GM10248 (cell line): ENCODE measurements at regions of chr7 and their contacts with region 1.

Region 1: GRCh38 chr7:142853739-142854371 is 1.0 kb upstream of the EPHB6 start:
- DNase-seq: peak; percentile 84
- CTCF ChIP-seq: peak; percentile 64

Region 2: GRCh38 chr7:142614116-142614515 is 239.7 kb before region 1 on chr7:
- CTCF ChIA-PET with region 1: no interaction called
- POLR2A ChIA-PET with region 1: no interaction called
- DNase-seq: no peak
- CTCF ChIP-seq: no peak

Region 3: DNA sequence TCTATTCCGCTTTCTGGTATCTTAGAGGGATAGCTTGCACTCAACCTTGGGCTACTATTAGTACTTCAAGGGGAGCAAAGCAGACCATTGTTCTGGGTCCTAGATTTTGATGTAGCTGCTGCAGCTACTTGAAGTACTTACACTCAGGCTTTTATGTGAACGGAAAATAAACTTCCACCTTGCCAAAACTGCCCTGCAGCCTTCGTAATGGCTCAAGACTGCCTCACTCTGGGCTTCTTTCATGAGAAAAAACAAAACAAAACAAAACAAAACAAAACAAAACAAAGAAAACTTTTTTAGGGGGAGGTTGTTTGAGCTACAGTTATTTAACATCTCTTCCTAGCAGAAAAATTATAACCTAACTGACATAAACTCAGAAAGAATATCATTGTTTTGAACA is 18.4 kb before region 1 on chr7:
- CTCF ChIA-PET with region 1: interaction called, 11 read pairs
- POLR2A ChIA-PET with region 1: no interaction called
- DNase-seq: no peak
- CTCF ChIP-seq: no peak

Region 4: DNA sequence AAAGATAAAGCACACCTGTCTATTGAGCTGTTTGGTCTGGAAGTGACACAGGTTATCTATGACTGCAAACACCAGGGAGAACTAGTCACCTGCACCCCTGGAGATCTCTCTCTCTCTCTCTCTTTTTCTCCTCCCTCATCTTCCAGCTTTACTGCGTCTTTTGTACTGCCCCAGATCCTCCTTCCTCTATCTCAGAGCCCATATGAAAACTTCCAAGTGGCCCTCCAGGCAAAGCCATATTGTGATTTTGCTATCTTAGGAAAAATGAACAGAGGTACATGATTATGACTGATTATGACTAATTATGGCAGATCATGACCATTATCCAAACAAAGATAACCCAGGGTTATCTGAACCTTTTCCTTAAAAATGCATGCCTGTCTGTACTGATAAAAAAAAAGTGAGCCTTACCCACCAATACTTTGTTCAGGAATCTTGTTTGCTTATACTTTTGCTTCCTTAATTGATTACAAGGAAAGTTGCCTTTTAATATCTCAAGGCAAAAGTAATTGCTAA is 11.5 kb before region 1 on chr7:
- CTCF ChIA-PET with region 1: interaction called, 11 read pairs
- POLR2A ChIA-PET with region 1: no interaction called
- DNase-seq: no peak
- CTCF ChIP-seq: no peak

Region 5: DNA sequence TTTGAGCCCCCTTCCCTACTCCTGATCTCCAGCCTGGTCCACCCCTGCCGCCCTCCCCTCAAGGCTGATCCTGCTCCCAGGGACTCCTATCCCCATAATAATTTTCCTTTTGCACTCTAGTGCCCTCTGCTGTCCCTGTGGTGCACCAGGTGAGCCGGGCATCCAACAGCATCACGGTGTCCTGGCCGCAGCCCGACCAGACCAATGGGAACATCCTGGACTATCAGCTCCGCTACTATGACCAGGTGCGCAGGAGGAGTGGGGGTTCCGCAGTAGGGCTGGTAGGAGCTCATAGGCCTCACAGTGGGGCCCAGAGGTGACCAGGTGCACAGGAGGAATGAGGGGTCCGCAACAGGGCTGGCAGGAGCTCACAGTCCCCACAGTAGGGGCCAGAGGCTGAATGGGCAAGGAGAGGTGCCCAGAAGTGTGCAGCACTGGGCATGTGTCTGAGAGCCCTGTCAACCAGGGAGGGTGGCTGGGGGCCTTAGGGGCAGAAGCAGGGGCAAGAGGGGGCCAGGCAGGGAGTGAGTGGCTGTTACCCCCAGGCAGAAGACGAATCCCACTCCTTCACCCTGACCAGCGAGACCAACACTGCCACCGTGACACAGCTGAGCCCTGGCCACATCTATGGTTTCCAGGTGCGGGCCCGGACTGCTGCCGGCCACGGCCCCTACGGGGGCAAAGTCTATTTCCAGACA is 12.7 kb after region 1 on chr7:
- CTCF ChIA-PET with region 1: interaction called, 28 read pairs
- POLR2A ChIA-PET with region 1: no interaction called
- DNase-seq: no peak
- CTCF ChIP-seq: peak; percentile 70

Region 6: GRCh38 chr7:142880876-142881505 is 27.1 kb after region 1 on chr7:
- CTCF ChIA-PET with region 1: interaction called, 24 read pairs
- POLR2A ChIA-PET with region 1: no interaction called
- DNase-seq: peak; percentile 72
- CTCF ChIP-seq: peak; percentile 73